ENCODE measurements at regions of chr13 and their contacts with region 1.

Region 1: DNA sequence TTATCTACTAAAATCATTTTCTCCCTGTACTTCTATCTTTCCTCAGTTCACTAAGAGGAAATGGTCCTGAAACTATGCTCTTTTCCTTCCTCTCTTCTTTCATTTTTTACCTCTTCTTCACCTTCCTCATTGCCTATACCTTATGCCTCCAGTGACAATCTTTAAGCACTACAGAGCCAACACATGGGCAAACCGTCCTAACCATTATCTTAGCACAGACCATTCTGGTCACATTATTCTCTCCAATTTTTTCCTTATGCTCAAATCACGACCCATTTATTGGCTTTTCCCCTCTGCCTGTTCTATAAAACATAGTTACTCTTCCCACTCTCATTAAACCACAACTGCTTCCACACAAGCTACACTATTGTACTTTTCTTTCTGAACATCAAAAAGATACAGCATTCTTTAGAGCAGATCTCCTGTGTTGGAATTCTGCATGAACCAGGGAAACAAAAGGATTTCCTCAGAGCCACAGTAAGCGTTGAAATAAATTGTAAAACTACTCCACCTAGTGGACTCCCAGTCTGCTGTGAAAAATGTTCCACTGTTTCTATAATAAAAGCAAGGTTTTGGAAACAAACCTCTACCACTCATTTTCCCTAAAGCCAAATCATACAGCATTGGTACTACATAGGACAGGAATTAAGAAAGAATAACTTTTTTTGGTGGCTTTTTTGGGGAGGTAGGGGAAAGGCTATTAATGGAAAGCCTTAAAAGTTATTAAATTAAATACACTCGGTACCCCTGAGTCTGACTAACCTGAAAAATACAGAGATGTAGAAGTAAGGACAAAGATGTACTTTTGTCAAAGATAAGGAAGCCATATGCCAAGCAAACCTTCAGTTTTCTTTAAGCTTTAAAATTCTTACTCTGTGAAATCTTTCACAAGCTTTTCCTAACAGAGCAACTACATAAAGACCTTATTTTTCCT is 19.5 kb downstream of the NUFIP1 start:
- DNase-seq: peak; percentile 70
- ATAC-seq: peak; percentile 74
- H3K4me3 ChIP-seq: no peak overlapping the region
- H3K27ac ChIP-seq: no peak overlapping the region
- H3K4me1 ChIP-seq: peaks cover 6% of the 10 kb centered on the region; the same call in 1 of the 2 replicates
- H3K27me3 ChIP-seq: no peaks in the 10 kb centered on the region
- CTCF ChIP-seq: peak; percentile 86

Region 2: DNA sequence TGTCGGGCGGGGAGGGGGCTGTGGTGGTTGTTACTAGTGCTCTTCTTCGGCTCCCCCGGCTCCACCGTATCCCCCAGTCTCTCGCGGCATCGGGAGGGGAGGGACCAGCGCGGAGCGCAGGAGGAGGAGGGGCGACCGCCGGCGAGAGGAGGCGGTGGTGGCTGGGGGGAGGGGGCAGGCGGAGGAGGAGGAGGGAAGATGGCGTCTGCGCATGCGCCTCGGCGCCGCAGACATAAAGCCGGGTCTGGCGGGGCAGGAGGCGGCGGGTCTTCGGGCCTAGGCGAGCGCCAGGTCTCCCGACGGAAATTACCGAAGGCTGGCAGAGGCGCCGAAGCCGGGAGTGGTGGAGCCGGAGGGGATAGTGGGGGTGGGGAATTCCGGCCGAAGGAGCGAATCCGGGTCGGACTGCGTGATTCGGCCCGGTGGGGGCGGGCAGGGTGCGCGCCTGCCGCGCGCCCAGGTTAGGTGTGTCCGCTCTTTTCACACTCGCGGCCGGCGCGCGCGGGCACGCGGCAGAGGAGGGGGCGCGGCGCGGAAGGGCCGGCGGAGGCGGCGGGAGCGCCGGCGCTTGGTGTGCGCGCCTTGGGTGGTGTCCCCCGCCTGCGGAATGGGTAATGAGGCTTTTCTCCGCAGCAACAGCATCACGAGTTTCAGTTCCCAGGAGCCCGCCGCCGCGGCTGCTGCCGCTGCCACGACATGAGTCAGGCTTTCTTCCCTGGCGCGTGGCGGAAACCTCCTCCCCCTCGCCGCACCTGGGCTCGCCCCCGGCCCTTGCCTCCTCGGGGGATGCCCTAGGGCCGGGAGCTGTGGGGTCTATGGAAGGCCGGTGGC is 392.4 kb before region 1 on chr13:
- CTCF ChIA-PET with region 1: no interaction called
- POLR2A ChIA-PET with region 1: no interaction called
- intact Hi-C with region 1: loop called (anchors 5 kb)
- DNase-seq: peak; percentile 93
- ATAC-seq: peak; percentile 68
- H3K4me3 ChIP-seq: peak overlapping the region; percentile 84
- H3K27ac ChIP-seq: peak overlapping the region; percentile 80
- H3K4me1 ChIP-seq: peaks cover 36% of the 10 kb centered on the region
- H3K27me3 ChIP-seq: no peaks in the 10 kb centered on the region
- CTCF ChIP-seq: no peak

Region 3: GRCh38 chr13:44917589-44918325 is 52.1 kb before region 1 on chr13:
- CTCF ChIA-PET with region 1: no interaction called
- POLR2A ChIA-PET with region 1: no interaction called
- intact Hi-C with region 1: loop called (anchors 1 kb)
- DNase-seq: peak; percentile 92
- ATAC-seq: peak; percentile 52
- H3K4me3 ChIP-seq: peak overlapping the region; percentile 71
- H3K27ac ChIP-seq: peak overlapping the region; percentile 94
- H3K4me1 ChIP-seq: peaks cover 28% of the 10 kb centered on the region
- H3K27me3 ChIP-seq: no peaks in the 10 kb centered on the region
- CTCF ChIP-seq: no peak

Region 4: DNA sequence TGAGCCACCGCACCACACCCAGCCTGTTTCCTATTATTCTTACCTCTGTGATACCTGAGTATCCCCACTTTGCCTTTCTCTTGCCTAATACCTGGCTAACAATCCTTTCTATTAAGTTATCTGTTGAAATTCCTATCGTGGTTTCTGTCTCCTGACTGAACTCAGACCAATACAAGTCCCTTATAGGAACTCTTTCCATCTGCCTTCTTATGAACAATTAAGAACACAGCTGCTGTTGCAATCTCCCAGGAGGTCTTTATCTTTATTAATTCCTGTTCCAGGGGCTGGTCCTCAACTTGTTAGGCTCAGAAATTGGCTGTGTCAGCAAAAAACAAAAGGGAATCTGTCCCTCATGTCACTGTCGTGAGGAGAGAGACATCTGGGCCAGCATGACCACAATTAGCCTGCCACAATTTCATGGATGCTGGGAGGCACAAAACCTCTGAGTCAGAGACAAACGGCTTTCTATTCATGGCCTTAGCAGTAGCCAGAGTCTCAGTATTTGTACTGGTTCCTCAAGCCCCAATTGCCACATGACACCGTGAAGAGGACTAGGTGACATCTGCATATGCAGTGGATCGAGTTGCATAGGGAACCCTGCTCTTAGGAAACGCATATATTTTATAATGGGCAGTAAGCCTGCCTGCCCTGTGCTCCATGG is 38.7 kb before region 1 on chr13:
- CTCF ChIA-PET with region 1: no interaction called
- POLR2A ChIA-PET with region 1: no interaction called
- intact Hi-C with region 1: loop called (anchors 5 kb)
- DNase-seq: peak; percentile 27
- ATAC-seq: no peak
- H3K4me3 ChIP-seq: no peak overlapping the region
- H3K27ac ChIP-seq: peak overlapping the region; percentile 97
- H3K4me1 ChIP-seq: peaks cover 51% of the 10 kb centered on the region
- H3K27me3 ChIP-seq: no peaks in the 10 kb centered on the region
- CTCF ChIP-seq: no peak

Region 5: DNA sequence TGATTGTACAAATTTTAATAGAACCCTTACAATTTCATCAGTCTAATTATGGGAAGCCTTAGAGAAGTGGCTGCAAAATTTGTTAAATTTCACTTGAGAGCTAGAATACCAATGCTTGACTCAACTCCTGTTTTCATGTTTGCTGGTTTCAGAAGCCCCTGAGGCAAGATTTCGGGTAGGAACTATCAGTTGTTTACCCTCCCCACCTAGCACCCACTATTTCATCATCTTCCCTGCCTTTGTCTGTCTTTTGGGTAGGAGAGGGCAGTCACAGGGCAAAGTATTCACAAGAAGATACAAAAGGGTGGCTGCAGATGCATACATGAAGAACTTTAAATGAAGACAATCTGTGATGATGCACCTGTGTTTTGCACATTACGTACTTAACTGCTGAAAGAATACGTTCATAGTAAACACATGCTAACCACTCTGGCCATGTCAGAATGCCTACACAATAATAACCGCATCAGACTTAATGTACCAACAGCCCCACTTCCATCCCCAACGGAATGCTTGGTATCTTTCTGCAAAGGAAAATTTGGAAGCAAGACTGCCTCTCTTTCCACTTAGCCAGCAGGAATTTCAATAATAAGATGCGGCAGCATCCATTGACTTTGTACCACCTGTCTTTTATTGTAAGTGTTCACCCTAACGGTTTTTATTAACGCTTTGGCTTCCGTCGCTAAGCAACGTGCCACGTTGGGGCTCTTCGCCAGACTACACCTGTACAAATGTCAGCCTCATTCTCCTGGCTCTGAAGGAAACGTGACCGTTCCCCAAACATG is 340.7 kb after region 1 on chr13:
- CTCF ChIA-PET with region 1: no interaction called
- POLR2A ChIA-PET with region 1: no interaction called
- intact Hi-C with region 1: loop called (anchors 2 kb)
- DNase-seq: no peak
- ATAC-seq: no peak
- H3K4me3 ChIP-seq: peak overlapping the region; percentile 66
- H3K27ac ChIP-seq: no peak overlapping the region
- H3K4me1 ChIP-seq: peaks cover 12% of the 10 kb centered on the region
- H3K27me3 ChIP-seq: no peaks in the 10 kb centered on the region
- CTCF ChIP-seq: no peak